Calu3 (cell line): ENCODE measurements at regions of chr1 and their contacts with region 1.

Region 1: GRCh38 chr1:145927063-145927886 is at the start of gene RBM8A:
- DNase-seq: peak; percentile 95
- H3K4me3 Mint-ChIP-seq: no peak within 1 kb of the TSS
- H3K27ac Mint-ChIP-seq: no peak within 1 kb of the TSS
- H3K4me1 Mint-ChIP-seq: peaks cover 16% of the 10 kb centered on the region
- H3K27me3 Mint-ChIP-seq: no peaks in the 10 kb centered on the region
- CTCF ChIP-seq: peak; percentile 82
- total RNA-seq, gene RBM8A: 167 and 177 TPM in 2 replicates

Region 2: GRCh38 chr1:145901318-145902021 is 25.8 kb before region 1 on chr1:
- CTCF ChIA-PET with region 1: no interaction called
- intact Hi-C with region 1: no loop called
- DNase-seq: no peak
- H3K4me3 Mint-ChIP-seq: no peak overlapping the region
- H3K27ac Mint-ChIP-seq: no peak overlapping the region
- H3K4me1 Mint-ChIP-seq: no peaks in the 10 kb centered on the region
- H3K27me3 Mint-ChIP-seq: no peaks in the 10 kb centered on the region
- CTCF ChIP-seq: no peak

Region 3: DNA sequence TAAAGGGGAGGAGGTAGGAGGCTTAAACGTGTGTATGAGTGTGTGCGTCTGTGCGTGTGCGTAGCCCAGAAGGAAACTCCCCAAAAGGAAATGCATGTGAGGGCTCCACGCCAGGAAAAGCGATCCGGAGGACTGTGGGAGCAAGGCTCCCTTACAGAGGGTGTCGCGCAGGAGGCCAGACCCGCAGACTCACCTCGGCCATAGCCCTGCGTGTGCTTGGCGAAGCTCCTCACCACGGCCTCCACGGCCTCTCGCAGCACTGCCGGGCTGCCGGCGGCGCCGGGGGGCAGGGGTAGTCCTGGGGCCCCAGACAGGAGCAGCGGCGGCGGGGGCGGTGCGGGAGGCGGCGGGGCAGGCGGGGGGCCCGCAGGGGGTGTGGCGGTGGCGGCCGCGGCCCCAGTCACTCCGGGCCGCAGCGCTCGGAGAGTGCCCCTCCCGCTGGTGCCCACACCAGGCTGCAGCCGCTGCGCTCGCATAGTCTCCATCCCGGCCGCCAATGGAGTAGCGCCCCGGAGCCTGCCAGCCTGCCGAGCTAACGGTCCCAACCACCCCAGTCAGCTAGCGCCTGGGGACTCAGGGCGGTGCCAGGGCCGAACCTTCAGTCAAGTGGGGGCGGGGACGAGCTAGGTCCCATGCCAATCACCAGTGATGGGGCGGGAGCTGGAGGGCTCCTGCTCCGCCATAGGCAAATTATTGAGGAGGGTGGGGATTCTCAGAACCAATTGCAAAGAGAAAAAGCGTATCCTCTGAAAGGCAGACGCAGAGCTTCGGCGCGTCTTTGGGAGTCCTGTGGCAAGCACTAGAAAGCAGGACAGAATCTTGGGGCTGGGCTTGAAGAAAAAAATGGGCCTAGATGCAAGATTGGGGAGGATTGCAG is 30.4 kb after region 1 on chr1 and contains the start of gene LIX1L:
- CTCF ChIA-PET with region 1: interaction called, 11 read pairs
- intact Hi-C with region 1: no loop called
- DNase-seq: peak; percentile 97
- H3K4me3 Mint-ChIP-seq: peak within 1 kb of the TSS; percentile 70
- H3K27ac Mint-ChIP-seq: peak within 1 kb of the TSS; percentile 17
- H3K4me1 Mint-ChIP-seq: peaks cover 42% of the 10 kb centered on the region
- H3K27me3 Mint-ChIP-seq: peaks cover 84% of the 10 kb centered on the region
- CTCF ChIP-seq: no peak
- total RNA-seq, gene LIX1L: 6.3 and 7.2 TPM in 2 replicates

Region 4: DNA sequence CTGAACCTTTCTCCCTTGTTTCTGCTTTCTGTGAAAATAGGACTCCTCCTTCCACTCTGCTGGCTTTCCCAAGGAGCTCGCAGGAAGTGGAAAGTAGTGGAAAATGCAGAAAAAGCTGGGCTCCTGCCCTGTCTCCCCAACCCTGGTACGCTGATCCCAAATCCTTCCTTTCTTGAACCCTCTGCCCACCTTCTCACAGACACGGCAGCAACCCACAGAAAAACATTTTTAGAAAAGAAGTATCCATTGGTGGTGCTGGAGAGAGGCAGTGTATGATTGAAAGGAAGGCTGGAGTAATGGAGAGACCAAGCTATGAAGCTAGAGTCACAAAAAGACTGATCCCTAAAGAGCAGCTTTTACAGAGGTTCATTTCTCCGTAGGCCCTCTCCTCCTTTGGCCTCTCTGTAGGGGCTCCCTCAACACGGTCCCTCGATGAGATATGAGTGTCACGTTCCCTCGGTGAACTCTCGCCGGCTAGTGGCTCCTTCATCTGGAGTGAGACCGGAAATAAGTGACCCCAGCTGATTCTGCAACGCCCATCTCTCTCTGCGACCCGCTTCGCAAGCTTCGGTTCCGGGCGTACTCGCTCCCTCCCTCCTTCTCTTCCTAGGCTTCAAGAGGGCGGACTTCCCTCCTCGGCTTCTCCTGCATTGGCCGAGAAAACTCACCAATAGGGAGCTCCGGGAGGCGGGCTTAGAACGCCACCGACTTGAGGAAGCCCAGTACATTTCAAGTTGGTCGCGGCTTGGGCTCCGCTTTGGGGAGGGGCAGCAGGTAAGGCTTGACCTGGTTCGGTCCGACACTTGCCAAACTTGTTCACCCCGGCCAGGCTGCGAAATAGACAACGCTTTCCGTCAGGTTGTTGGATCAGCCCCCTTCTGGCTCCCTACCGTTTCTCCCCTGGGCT is 37.0 kb after region 1 on chr1 and contains the starts of genes ANKRD34A and POLR3GL:
- CTCF ChIA-PET with region 1: interaction called, 11 read pairs
- intact Hi-C with region 1: loop called (anchors 2 kb)
- DNase-seq: peak; percentile 94
- H3K4me3 Mint-ChIP-seq: peak within 1 kb of the TSS; percentile 89
- H3K27ac Mint-ChIP-seq: peak within 1 kb of the TSS; percentile 74
- H3K4me1 Mint-ChIP-seq: peaks cover 48% of the 10 kb centered on the region
- H3K27me3 Mint-ChIP-seq: peaks cover 48% of the 10 kb centered on the region
- CTCF ChIP-seq: no peak
- total RNA-seq, gene ANKRD34A: 0.19 and 0.27 TPM in 2 replicates
- total RNA-seq, gene POLR3GL: 9.9 and 11.5 TPM in 2 replicates